ENCODE measurements at regions of chr13 and their contacts with region 1.

Region 1: DNA sequence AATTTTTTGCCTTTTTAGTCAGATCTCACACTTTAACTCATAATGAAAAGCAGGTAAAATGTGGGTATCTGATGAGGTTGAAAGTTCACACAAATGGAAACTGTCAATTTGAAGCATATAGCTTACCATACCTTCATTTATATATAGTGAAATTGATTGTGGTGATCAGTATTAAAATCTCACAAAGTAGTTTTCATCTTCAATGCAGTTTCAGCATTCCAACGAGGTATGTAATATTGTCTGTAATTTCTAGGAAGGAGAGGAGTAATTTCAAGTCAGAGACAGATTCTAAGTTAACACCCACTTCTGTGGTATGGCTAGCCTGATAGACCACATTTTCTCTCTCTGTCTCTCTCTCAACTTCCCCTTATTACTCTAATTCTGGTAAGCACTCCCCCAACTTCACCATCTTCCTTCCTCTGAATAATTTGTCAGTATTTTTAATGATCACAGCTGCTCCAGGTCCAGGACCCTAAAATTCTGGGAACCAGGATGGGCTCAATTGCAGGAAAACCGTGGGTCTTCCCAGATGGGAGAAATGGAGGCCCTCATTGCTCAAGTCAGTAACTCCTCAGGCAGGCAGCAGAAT is 455.7 kb downstream of the FGF9 start:
- DNase-seq: no peak
- H3K4me3 Mint-ChIP-seq: peak overlapping the region; percentile 22
- H3K27ac Mint-ChIP-seq: peak overlapping the region; percentile 22
- H3K4me1 Mint-ChIP-seq: peaks cover 41% of the 10 kb centered on the region
- H3K27me3 Mint-ChIP-seq: no peaks in the 10 kb centered on the region

Region 2: DNA sequence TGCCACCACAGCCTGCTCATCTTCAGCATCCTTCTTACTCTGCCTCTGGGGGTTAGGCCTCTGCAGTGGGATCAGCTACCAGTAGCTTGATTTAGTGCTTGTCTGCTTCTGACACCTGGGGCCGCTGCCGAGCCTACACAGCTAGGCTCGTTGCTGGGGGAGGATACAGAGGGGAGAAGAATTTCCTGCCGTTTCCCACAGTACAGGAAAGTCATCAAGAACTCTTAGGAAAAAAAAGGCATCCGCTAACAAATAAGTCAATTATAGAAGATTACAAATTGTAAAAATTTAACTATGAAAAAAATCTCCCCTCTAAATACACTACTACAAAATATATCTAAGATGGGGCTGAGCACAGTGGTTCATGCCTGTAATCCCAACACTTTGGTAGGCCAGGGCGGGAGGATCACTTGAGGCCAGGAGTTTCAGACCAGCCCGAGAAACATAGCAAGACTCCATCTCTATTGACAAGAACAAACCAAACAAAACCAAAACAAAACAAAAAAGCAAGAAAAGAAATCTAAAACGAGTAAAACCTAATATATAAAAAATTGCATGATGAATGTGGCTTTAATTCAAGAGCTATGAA is 1091.8 kb before region 1 on chr13:
- intact Hi-C with region 1: no loop called
- DNase-seq: no peak
- H3K4me3 Mint-ChIP-seq: no peak overlapping the region
- H3K27ac Mint-ChIP-seq: no peak overlapping the region
- H3K4me1 Mint-ChIP-seq: peaks cover 15% of the 10 kb centered on the region
- H3K27me3 Mint-ChIP-seq: no peaks in the 10 kb centered on the region

Region 3: DNA sequence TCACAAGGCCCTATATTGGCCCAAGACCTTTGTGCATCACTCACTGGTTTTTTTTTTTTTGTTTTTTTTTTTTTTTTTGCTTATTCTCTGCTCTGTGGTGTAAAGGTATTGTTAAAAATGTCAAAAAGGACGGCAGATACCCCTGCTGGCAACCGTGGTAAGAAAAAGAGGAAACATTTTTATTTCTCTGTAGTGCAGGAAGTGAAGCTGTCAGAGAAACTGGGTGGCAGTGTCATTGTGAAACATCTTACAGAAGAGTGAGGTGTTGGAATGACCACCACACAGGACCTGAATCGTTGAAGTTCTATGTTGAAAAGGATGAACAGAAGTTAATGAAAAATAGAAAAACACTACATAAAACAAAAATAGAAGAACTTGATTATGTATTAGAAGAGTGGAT is 109.3 kb before region 1 on chr13:
- intact Hi-C with region 1: loop called (anchors 5 kb)
- DNase-seq: no peak
- H3K4me3 Mint-ChIP-seq: no peak overlapping the region
- H3K27ac Mint-ChIP-seq: no peak overlapping the region
- H3K4me1 Mint-ChIP-seq: peaks cover 4% of the 10 kb centered on the region
- H3K27me3 Mint-ChIP-seq: no peaks in the 10 kb centered on the region

Region 4: DNA sequence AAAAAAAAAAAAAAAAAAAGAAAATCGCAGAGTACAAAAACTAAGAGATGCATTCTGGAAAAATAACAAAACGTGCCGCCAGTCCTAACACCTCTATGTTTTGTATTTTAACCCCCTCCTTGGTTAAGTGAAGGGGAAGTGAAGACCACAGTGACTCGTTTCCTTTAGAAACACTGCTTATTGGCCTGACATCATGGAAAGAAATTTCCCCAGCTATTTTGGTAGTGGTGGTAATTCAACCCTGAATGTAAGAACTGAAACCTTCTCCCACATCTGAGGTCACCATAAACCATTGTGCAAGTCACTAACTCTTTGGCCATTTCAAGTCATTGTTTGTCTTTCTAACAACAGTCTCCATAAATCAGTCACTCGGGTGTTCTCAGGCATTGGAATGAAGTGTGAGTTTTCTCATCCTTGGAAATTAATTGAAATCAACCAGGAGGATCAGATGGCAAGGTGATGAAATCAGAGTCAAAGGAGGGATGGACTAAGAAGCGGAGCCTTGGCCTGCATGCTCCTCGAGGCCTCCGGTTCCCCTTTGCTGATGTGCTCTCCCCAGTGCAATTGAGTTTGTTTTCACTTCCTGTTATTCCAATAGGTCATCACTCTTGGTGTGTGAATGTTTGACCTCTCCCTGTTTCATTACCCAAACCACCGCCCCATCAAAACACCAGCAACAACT is 11.8 kb before region 1 on chr13:
- intact Hi-C with region 1: loop called (anchors 1 kb)
- DNase-seq: peak; percentile 31
- H3K4me3 Mint-ChIP-seq: no peak overlapping the region
- H3K27ac Mint-ChIP-seq: peak overlapping the region; percentile 91
- H3K4me1 Mint-ChIP-seq: peaks cover 51% of the 10 kb centered on the region
- H3K27me3 Mint-ChIP-seq: no peaks in the 10 kb centered on the region

Region 5: DNA sequence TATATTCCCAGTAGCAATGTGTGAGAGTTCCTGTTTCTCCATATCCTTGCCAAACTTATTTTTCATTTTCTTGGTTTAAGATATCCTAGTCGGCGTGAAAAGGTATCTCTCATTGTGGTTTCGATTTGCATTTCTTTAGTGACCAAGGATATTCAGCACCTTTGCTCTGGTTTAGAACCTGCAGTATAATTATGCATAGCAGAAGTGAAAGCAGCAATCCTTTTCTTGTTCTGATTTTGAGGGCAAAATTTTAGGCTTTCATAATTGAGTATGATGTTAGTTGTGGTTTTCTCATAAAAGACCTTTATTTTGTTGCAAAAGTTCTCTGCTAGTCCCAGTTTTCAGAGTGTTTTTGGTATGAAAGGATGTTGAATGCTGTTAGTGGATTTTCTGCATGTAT is 35.3 kb after region 1 on chr13:
- intact Hi-C with region 1: loop called (anchors 5 kb)
- DNase-seq: no peak
- H3K4me3 Mint-ChIP-seq: no peak overlapping the region
- H3K27ac Mint-ChIP-seq: no peak overlapping the region
- H3K4me1 Mint-ChIP-seq: peaks cover 20% of the 10 kb centered on the region
- H3K27me3 Mint-ChIP-seq: peaks cover 5% of the 10 kb centered on the region

Region 6: DNA sequence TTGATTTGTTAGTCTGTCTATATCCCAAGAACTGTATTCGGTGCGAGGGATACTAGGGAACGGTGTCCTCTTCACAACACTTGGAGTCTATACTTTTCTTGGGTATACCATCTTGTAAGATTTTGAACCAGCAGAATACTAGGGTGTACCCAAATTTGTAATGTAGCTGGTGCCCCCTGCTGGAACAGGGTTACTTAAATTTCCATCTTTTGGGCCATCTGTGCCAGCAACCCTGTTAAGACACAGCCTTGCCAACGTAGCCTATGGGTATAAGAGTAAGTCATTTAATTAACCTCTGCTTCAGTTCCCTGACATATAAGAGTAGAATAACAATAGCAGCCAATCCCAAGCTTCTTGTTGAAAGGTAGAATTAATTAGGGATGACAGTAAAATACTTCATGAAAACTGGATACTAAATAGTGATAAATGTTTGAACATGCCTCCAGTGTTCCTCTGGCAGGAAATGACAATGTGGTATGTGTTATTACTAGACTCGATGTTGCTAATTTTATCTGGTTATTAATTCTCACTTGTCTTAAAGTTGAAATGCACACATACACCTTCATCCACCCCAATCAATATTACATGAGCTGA is 151.9 kb after region 1 on chr13:
- intact Hi-C with region 1: loop called (anchors 10 kb)
- DNase-seq: peak; percentile 16
- H3K4me3 Mint-ChIP-seq: no peak overlapping the region
- H3K27ac Mint-ChIP-seq: no peak overlapping the region
- H3K4me1 Mint-ChIP-seq: no peaks in the 10 kb centered on the region
- H3K27me3 Mint-ChIP-seq: no peaks in the 10 kb centered on the region